Esophagus muscularis mucosa (tissue), 4 donors: ENCODE measurements at regions of chr19 and their contacts with region 1.

Region 1: DNA sequence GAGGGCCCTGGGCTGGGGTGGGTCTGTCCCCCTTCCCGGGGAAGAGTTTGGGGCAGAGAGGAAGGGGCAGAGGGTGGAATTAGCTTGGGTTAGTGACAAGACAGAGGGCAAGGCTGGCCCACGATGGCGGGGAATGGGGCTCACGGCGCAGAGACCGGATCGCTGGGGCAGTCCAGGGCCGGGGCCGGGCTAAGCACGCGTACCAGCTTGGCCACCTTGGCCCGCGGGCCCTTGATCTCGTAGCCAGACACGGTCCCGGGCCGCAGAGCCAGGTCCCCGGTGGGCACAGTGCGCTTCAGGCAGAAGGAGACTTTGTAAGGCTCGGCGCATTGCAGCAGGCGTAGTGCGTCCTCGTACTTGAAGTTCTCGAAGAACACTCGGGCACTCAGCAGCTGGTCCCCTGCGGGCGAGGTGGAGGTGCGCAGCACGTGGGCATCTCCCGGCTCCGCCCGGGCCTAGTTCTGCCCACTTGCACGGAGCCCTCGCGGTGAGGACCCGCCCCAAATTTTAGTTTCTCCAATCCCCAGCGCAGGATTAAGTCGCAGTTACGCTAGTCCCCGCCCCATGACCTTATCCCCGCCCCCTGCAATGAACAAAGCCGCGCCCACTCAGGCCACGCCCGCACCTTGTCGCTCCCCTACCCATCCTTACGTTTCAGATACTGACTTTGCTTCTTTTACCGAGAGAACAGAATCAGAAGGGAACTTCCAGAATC is 8.6 kb upstream of the HIPK4 start:
- DNase-seq: no peak
- H3K4me3 ChIP-seq: peak overlapping the region in 2 of 4 donors; percentile 12 to 16
- H3K27ac ChIP-seq: no peak overlapping the region
- H3K4me1 ChIP-seq: peaks cover 6 to 18% (median 10%) of the 10 kb centered on the region in 4 donors
- H3K27me3 ChIP-seq: no peaks in the 10 kb centered on the region
- CTCF ChIP-seq: no peak
- EP300 ChIP-seq: no peak
- POLR2A ChIP-seq: no peak

Region 2: GRCh38 chr19:40348125-40348913 is 50.3 kb before region 1 on chr19 and contains the starts of genes C19orf47 and PLD3:
- intact Hi-C with region 1: loop called (anchors 5 kb)
- DNase-seq: peak; percentile 100
- H3K4me3 ChIP-seq: peak within 1 kb of the TSS; percentile 63 to 90 (median 70)
- H3K27ac ChIP-seq: peak within 1 kb of the TSS; percentile 71 to 86 (median 79)
- H3K4me1 ChIP-seq: peaks cover 9 to 48% (median 36%) of the 10 kb centered on the region in 4 donors
- H3K27me3 ChIP-seq: no peaks in the 10 kb centered on the region
- CTCF ChIP-seq: no peak
- EP300 ChIP-seq: no peak
- POLR2A ChIP-seq: peak; percentile 87
- total RNA-seq, gene C19orf47: 17.9 to 42.6 (median 26.8) TPM
- total RNA-seq, gene PLD3: 206 to 280 (median 223) TPM